Heart right ventricle (tissue), 16 donors: ENCODE measurements at regions of chr16 and their contacts with region 1.

Region 1: GRCh38 chr16:29995911-29996772 is at the start of gene INO80E:
- DNase-seq: peak; percentile 99 to 100
- ATAC-seq: peak; percentile 98 to 99 (median 99)
- H3K4me3 ChIP-seq: peak within 1 kb of the TSS; percentile 55 to 97 (median 82)
- H3K27ac ChIP-seq: peak within 1 kb of the TSS; percentile 87 to 99 (median 96)
- H3K4me1 ChIP-seq: peaks cover 7 to 40% (median 28%) of the 10 kb centered on the region in 9 donors
- H3K27me3 ChIP-seq: no peaks in the 10 kb centered on the region
- CTCF ChIP-seq: peak in 1 of 9 donors; percentile 18
- total RNA-seq, gene INO80E: 23.2 to 34.8 (median 30.6) TPM

Region 2: GRCh38 chr16:29714972-29715371 is 281.2 kb before region 1 on chr16:
- intact Hi-C with region 1: no loop called
- DNase-seq: no peak
- ATAC-seq: no peak
- H3K4me3 ChIP-seq: no peak overlapping the region
- H3K27ac ChIP-seq: no peak overlapping the region
- H3K4me1 ChIP-seq: peaks cover 0 to 21% (median 0%) of the 10 kb centered on the region in 9 donors
- H3K27me3 ChIP-seq: no peaks in the 10 kb centered on the region
- CTCF ChIP-seq: no peak

Region 3: DNA sequence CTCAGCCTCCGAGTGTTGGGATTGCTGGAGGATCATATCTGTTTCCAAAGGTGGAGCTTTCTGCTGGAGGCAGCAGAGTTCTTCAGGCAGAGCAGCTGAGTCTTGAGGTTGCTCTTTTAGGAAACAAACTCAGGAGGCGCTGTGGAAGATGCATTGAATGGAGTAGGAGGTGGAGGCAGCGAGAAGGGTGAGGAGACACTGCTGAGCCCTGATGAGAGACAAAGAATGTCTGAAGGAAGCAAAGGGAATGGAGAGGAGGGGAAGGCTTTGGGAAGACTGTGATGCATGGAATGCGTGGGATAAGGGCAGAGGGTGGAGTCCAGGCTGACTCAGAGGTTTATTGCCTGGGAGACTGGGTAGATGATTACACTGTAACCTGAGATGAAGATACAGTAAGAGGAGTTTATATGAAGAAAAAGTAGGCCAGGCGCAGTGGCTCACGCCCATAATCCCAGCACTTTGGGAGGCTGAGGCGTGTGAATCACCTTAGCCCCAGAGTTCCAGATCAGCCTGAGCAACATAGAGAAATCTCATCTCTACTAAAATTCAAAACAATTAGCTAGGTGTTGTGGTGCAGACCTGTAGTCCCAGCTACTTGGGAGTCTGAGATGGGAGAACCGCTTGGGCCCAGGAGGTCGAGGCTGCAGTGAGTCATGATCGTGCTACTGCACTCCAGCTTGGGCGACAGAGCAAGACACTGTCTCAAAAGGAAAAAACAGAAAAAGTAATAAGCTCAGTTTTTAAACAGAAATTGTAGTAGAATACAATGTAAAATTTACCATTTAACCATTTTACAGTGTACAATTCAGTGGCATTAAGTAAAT is 52.1 kb before region 1 on chr16:
- intact Hi-C with region 1: no loop called
- DNase-seq: no peak
- ATAC-seq: peak in 5 of 8 donors; percentile 46 to 85 (median 62)
- H3K4me3 ChIP-seq: no peak overlapping the region
- H3K27ac ChIP-seq: peak overlapping the region in 1 of 10 donors; percentile 38
- H3K4me1 ChIP-seq: peaks cover 0 to 13% (median 0%) of the 10 kb centered on the region in 9 donors
- H3K27me3 ChIP-seq: peaks cover 0 to 6% (median 0%) of the 10 kb centered on the region in 7 donors
- CTCF ChIP-seq: peak in 1 of 9 donors; percentile 16

Region 4: DNA sequence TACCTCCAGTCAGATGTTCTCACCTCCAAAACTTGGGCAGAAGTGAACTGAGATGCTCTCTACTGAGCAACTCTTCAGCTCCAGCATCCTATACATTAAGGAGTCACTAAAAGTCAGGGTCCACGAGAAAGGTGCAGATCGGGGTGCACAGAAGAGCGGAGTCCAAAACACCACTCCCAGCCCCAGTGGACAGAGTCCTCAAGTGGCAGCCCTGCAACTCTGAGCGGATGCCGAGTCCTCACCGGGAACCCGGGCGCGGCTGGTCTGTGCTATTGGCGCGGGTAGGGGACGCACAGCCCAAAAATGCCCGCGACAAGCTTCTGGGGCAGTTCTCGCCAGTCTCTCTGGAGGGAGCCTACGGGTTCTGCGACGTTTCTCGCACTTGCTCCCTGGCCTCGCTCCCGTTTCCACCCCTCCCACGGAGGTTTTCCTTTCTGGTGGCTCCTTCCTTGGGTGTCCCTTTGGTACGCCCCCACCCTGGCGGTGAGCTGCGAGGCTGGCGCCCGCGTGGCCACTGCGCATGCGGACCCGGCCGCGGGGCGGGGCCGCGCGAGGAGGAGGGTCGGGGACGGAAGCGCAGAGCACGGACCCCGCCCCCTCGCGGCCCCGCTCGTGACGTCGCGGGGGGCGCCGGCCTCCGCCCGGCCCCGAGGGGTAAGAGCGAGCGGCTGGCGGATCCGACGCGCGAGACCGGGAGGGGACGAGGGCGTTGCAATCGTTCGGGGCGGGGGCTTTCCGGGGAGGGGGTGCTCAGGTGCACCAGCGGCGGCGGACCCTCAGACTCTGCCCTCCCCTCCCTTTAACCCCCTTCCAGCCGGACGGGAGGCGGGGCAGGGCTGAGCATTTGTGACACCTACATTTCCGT is 34.4 kb before region 1 on chr16 and contains the start of gene TMEM219:
- intact Hi-C with region 1: loop called in 3 of 10 experiments (anchors 5 kb)
- DNase-seq: peak; percentile 92 to 94
- ATAC-seq: peak; percentile 95 to 99 (median 97)
- H3K4me3 ChIP-seq: peak within 1 kb of the TSS; percentile 46 to 94 (median 81)
- H3K27ac ChIP-seq: peak within 1 kb of the TSS; percentile 93 to 98 (median 96)
- H3K4me1 ChIP-seq: peaks cover 0 to 35% (median 20%) of the 10 kb centered on the region in 9 donors
- H3K27me3 ChIP-seq: no peaks in the 10 kb centered on the region
- CTCF ChIP-seq: peak; percentile 29 to 69 (median 46)
- total RNA-seq, gene TMEM219: 53.0 to 105 (median 67.1) TPM